ENCODE measurements at regions of chr1 and their contacts with region 1.

Region 1: GRCh38 chr1:152047730-152048402 is 11.1 kb upstream of the S100A11 start:
- DNase-seq: peak; percentile 78
- H3K4me3 ChIP-seq: peak overlapping the region; percentile 27 to 55
- H3K27ac ChIP-seq: peak overlapping the region; percentile 90 to 97
- H3K4me1 ChIP-seq: peaks cover 11 to 12% of the 10 kb centered on the region in 2 experiments; a peak in 3 of 4 replicates
- H3K27me3 ChIP-seq: peaks cover 5% of the 10 kb centered on the region; the same call in 1 of the 2 replicates
- CTCF ChIP-seq: peak; percentile 67
- EP300 ChIP-seq: peak; percentile 15 to 53; a peak in 2 of 4 replicates
- RAD21 ChIP-seq: no peak

Region 2: DNA sequence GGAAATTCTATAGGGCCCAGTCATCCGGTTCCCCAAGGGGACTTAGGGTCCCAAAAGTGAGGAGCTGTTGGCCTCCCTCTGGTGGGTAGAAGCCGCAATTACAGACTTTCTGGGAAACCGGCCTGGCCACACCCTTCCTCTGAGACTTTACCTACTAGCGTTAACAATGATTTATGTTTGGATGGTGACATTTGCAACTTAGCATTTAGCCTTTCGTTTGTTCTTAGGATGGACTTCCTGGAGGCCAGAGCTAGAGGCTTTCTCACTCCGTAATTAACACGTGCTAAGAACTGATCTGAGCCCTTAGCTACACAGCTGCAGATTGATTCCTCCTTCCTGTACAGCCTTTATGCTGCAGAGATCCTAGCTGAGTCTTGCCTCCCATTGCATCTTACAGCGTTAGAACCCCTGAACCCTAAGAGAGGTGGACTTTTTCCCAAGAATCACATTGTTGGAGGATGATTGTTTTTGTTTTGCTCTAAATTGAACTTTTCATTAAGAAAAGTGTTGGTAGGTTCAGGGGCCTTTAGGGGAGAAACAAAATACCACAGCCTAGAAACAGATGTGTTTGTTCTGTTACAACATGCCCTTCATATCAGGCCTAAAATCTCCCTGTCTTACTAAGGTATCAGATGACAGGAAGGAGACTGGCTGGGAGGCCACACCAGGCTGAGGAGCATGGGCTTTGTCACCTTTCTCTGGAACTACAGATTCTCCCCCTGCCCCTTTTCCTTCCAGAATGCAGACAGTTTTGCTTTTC is 13.0 kb before region 1 on chr1:
- CTCF ChIA-PET with region 1: interaction called, 13 read pairs
- POLR2A ChIA-PET with region 1: no interaction called
- DNase-seq: peak; percentile 49
- H3K4me3 ChIP-seq: peak overlapping the region; percentile 69 to 91; a peak in 3 of 4 replicates
- H3K27ac ChIP-seq: peak overlapping the region; percentile 93 to 94
- H3K4me1 ChIP-seq: peaks cover 12 to 22% of the 10 kb centered on the region in 2 experiments; a peak in 2 of 4 replicates
- H3K27me3 ChIP-seq: peaks cover 8% of the 10 kb centered on the region; the same call in 1 of the 2 replicates
- CTCF ChIP-seq: peak; percentile 81
- EP300 ChIP-seq: no peak; a peak in 1 of 4 replicates
- RAD21 ChIP-seq: no peak

Region 3: DNA sequence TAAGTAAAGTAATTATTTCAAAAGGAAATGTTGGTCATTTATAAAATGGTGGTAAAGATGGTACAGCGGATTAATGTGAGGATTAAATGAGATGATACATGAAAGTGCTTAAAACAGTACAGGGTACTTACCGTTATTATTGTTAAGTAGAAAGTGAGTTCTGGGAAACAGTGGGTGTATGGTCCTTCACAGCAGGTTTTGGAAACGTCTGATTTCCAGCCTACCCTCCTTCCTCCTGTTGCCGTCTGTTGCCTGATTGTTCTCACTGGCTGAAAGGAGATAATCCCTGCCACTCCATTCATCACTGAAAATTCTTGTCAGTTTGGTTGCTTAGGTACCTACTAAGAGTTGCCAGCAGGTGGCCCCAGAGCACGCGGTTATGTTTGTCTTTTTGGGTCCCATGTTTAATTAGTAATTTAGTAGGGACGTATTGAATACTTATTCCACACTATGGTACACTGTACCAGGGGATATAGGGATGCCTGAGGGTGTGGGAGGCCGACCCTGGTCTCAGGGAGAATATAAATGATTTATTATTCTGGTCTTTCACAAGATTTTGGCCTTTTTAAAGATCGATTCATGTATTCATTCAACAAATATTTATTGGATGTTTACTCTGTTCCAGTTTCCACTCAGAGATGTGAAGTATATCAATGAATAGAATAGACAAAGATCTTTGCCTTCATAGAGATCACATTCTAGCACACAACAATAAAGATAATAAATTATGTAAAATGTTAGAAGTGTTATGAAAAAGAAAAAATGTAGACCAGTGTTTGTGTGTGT is 142.0 kb after region 1 on chr1:
- CTCF ChIA-PET with region 1: interaction called, 82 read pairs
- POLR2A ChIA-PET with region 1: no interaction called
- DNase-seq: peak; percentile 52
- H3K4me3 ChIP-seq: peak overlapping the region; percentile 8 to 45; a peak in 2 of 4 replicates
- H3K27ac ChIP-seq: no peak overlapping the region
- H3K4me1 ChIP-seq: no peaks in the 10 kb centered on the region; a peak in 1 of 4 replicates
- H3K27me3 ChIP-seq: 0 out of 2 replicates have a peak, but pooled peaks cover 5% of the 10 kb centered on the region
- CTCF ChIP-seq: peak; percentile 80
- EP300 ChIP-seq: no peak
- RAD21 ChIP-seq: peak; percentile 60